GM12878 (cell line): ENCODE measurements at regions of chr3 and their contacts with region 1.

Region 1: DNA sequence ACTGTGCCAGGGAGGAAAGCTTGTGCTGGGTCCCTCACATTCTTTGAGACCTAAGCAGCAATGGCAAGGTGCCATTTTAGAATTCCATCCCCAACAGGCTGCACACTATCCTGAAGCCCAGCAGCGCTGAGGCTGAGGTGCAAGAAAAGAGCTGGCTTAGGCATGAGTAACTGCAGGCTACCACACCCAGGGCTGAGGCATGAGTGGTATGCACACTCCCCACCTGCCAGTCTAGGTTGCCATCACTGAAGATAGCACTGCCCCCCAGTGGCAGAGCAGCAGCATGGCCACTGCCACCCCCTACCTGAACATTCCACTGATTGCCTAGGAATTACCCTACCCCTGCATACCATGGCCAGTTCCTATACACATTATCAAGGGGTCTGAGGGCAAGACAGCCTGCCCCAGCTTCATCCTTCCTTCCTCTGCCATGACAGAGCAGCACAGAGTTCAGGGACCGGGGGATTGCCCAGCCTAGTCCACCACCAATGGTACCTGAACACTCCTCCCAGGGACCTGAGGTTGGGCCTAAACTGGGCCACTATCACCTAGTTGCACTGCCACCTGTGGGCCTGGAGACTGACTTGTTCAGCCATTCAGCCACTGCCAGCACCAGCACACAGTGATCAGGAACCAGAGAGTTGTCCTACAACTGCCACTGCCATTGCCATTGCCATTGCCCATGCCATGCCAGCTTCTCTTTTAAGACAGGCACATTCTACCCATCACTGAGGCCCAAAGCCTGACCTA is 129.8 kb downstream of the SATB1 start:
- DNase-seq: no peak
- ATAC-seq: peak; percentile 100
- H3K4me3 ChIP-seq: no peak overlapping the region
- H3K27ac ChIP-seq: no peak overlapping the region
- H3K4me1 ChIP-seq: no peaks in the 10 kb centered on the region
- H3K27me3 ChIP-seq: no peaks in the 10 kb centered on the region
- CTCF ChIP-seq: peak; percentile 78 to 90 (median 85)
- EP300 ChIP-seq: no peak
- POLR2A ChIP-seq: no peak
- RAD21 ChIP-seq: peak; percentile 66

Region 2: GRCh38 chr3:17979252-17979651 is 316.1 kb before region 1 on chr3:
- CTCF ChIA-PET with region 1: interaction called, 4 read pairs
- POLR2A ChIA-PET with region 1: no interaction called
- RAD21 ChIA-PET with region 1: no interaction called
- SMC1A ChIA-PET with region 1: interaction called, 3 read pairs
- in situ Hi-C with region 1: no loop called
- intact Hi-C with region 1: loop called (anchors 10 kb)
- DNase-seq: no peak
- ATAC-seq: peak; percentile 18; the same call in 1 of the 3 replicates
- H3K4me3 ChIP-seq: no peak overlapping the region
- H3K27ac ChIP-seq: no peak overlapping the region
- H3K4me1 ChIP-seq: no peaks in the 10 kb centered on the region
- H3K27me3 ChIP-seq: peaks cover 0 to 2% of the 10 kb centered on the region in 2 experiments
- CTCF ChIP-seq: no peak
- EP300 ChIP-seq: no peak
- POLR2A ChIP-seq: no peak
- RAD21 ChIP-seq: no peak

Region 3: GRCh38 chr3:18159681-18160080 is 135.7 kb before region 1 on chr3:
- CTCF ChIA-PET with region 1: no interaction called
- POLR2A ChIA-PET with region 1: no interaction called
- RAD21 ChIA-PET with region 1: no interaction called
- SMC1A ChIA-PET with region 1: no interaction called
- in situ Hi-C with region 1: no loop called
- intact Hi-C with region 1: loop called (anchors 10 kb)
- DNase-seq: no peak
- ATAC-seq: no peak
- H3K4me3 ChIP-seq: no peak overlapping the region
- H3K27ac ChIP-seq: no peak overlapping the region
- H3K4me1 ChIP-seq: no peaks in the 10 kb centered on the region
- H3K27me3 ChIP-seq: no peaks in the 10 kb centered on the region; a peak in 2 of 4 replicates
- CTCF ChIP-seq: no peak
- EP300 ChIP-seq: no peak
- POLR2A ChIP-seq: no peak
- RAD21 ChIP-seq: no peak